CD4-positive, alpha-beta memory T cell (primary cell): ENCODE measurements at regions of chr1 and their contacts with region 1.

Region 1: GRCh38 chr1:77143529-77144121 is 75.6 kb downstream of the PIGK start:
- DNase-seq: peak in 3 of 5 donors; percentile 7 to 16 (median 8)
- H3K4me3 ChIP-seq: no peak overlapping the region
- H3K4me3 Mint-ChIP-seq: no peak overlapping the region
- H3K27ac ChIP-seq: no peak overlapping the region
- H3K27ac Mint-ChIP-seq: no peak overlapping the region
- H3K4me1 ChIP-seq: peaks cover 4% of the 10 kb centered on the region
- H3K4me1 Mint-ChIP-seq: peaks cover 3 to 6% (median 4%) of the 10 kb centered on the region in 4 donors
- H3K27me3 ChIP-seq: no peaks in the 10 kb centered on the region
- H3K27me3 Mint-ChIP-seq: no peaks in the 10 kb centered on the region

Region 2: DNA sequence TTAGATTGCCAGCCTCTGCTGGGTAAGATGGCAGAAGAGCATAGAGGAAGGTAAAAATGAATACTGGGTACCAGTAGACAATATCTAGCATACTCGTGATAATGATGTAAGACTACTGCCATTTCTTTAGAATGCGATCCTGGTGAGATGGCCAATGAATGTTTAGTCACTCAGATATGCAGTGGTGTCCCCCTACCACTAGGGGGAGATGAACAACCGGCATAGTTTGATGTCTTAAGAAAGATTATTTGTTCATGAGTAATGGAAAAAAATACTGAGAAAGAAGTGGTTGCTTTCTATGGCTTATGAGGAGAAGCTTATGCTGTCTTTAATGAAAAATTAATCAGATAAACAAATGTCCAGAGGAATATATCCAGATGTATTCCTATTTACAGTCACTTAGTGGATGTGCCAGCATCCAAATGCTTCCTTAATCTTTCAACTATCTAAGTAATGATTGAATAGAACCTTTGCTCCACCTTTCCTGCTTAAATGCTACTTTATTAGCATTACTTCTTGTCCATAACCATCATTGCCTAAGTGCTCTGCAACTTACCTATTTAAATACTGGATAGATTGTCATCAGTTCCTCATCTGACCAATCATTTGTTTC is 812.5 kb before region 1 on chr1:
- CTCF ChIA-PET with region 1: no interaction called
- POLR2A ChIA-PET with region 1: no interaction called
- intact Hi-C with region 1: loop called (anchors 5 kb)
- DNase-seq: peak; percentile 35 to 42 (median 36)
- H3K4me3 ChIP-seq: no peak overlapping the region
- H3K4me3 Mint-ChIP-seq: no peak overlapping the region
- H3K27ac ChIP-seq: no peak overlapping the region
- H3K27ac Mint-ChIP-seq: no peak overlapping the region
- H3K4me1 ChIP-seq: no peaks in the 10 kb centered on the region
- H3K4me1 Mint-ChIP-seq: peaks cover 0 to 6% (median 5%) of the 10 kb centered on the region in 4 donors
- H3K27me3 ChIP-seq: no peaks in the 10 kb centered on the region
- H3K27me3 Mint-ChIP-seq: no peaks in the 10 kb centered on the region

Region 3: DNA sequence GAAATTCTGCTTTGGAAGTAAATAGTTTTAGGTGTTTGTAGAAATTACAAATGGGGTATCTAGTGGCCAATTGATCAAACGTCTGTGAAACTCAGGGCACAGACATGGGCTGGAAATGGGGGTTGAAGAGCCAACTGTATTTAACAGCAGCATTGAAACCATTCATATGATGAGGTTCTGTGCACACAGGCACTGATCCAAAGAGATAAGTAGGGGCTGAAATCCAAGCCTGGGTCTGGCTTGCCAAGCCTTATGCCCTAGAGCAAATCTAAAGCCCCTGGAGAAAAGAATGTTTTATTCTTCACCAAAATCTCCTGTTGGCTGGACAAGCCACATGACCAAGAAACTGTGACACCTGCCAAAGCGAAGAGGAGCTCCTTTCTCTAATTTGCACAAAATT is 343.9 kb before region 1 on chr1:
- CTCF ChIA-PET with region 1: no interaction called
- POLR2A ChIA-PET with region 1: no interaction called
- intact Hi-C with region 1: no loop called
- DNase-seq: no peak
- H3K4me3 ChIP-seq: no peak overlapping the region
- H3K4me3 Mint-ChIP-seq: no peak overlapping the region
- H3K27ac ChIP-seq: no peak overlapping the region
- H3K27ac Mint-ChIP-seq: no peak overlapping the region
- H3K4me1 ChIP-seq: no peaks in the 10 kb centered on the region
- H3K4me1 Mint-ChIP-seq: no peaks in the 10 kb centered on the region
- H3K27me3 ChIP-seq: no peaks in the 10 kb centered on the region
- H3K27me3 Mint-ChIP-seq: no peaks in the 10 kb centered on the region

Region 4: GRCh38 chr1:76901158-76901767 is 242.4 kb before region 1 on chr1:
- CTCF ChIA-PET with region 1: no interaction called
- POLR2A ChIA-PET with region 1: no interaction called
- intact Hi-C with region 1: loop called (anchors 2 kb)
- DNase-seq: peak in 4 of 5 donors; percentile 10 to 19 (median 16)
- H3K4me3 ChIP-seq: no peak overlapping the region
- H3K4me3 Mint-ChIP-seq: no peak overlapping the region
- H3K27ac ChIP-seq: no peak overlapping the region
- H3K27ac Mint-ChIP-seq: no peak overlapping the region
- H3K4me1 ChIP-seq: no peaks in the 10 kb centered on the region
- H3K4me1 Mint-ChIP-seq: no peaks in the 10 kb centered on the region
- H3K27me3 ChIP-seq: no peaks in the 10 kb centered on the region
- H3K27me3 Mint-ChIP-seq: peaks cover 0 to 2% of the 10 kb centered on the region in 2 donors

Region 5: GRCh38 chr1:77044136-77044849 is 99.3 kb before region 1 on chr1:
- CTCF ChIA-PET with region 1: no interaction called
- POLR2A ChIA-PET with region 1: no interaction called
- intact Hi-C with region 1: no loop called
- DNase-seq: no peak
- H3K4me3 ChIP-seq: no peak overlapping the region
- H3K4me3 Mint-ChIP-seq: no peak overlapping the region
- H3K27ac ChIP-seq: no peak overlapping the region
- H3K27ac Mint-ChIP-seq: no peak overlapping the region
- H3K4me1 ChIP-seq: peaks cover 8% of the 10 kb centered on the region
- H3K4me1 Mint-ChIP-seq: peaks cover 9 to 23% (median 18%) of the 10 kb centered on the region in 4 donors
- H3K27me3 ChIP-seq: no peaks in the 10 kb centered on the region
- H3K27me3 Mint-ChIP-seq: peaks cover 4% of the 10 kb centered on the region in 2 donors

Region 6: GRCh38 chr1:77313491-77313890 is 169.9 kb after region 1 on chr1:
- CTCF ChIA-PET with region 1: no interaction called
- POLR2A ChIA-PET with region 1: no interaction called
- intact Hi-C with region 1: loop called (anchors 1 kb)
- DNase-seq: peak; percentile 12 to 25 (median 24)
- H3K4me3 ChIP-seq: no peak overlapping the region
- H3K4me3 Mint-ChIP-seq: peak overlapping the region in 1 of 8 donors; percentile 26
- H3K27ac ChIP-seq: no peak overlapping the region
- H3K27ac Mint-ChIP-seq: peak overlapping the region in 1 of 7 donors; percentile 37
- H3K4me1 ChIP-seq: peaks cover 17% of the 10 kb centered on the region
- H3K4me1 Mint-ChIP-seq: peaks cover 18 to 34% (median 26%) of the 10 kb centered on the region in 4 donors
- H3K27me3 ChIP-seq: no peaks in the 10 kb centered on the region
- H3K27me3 Mint-ChIP-seq: peaks cover 1 to 3% of the 10 kb centered on the region in 2 donors

Region 7: DNA sequence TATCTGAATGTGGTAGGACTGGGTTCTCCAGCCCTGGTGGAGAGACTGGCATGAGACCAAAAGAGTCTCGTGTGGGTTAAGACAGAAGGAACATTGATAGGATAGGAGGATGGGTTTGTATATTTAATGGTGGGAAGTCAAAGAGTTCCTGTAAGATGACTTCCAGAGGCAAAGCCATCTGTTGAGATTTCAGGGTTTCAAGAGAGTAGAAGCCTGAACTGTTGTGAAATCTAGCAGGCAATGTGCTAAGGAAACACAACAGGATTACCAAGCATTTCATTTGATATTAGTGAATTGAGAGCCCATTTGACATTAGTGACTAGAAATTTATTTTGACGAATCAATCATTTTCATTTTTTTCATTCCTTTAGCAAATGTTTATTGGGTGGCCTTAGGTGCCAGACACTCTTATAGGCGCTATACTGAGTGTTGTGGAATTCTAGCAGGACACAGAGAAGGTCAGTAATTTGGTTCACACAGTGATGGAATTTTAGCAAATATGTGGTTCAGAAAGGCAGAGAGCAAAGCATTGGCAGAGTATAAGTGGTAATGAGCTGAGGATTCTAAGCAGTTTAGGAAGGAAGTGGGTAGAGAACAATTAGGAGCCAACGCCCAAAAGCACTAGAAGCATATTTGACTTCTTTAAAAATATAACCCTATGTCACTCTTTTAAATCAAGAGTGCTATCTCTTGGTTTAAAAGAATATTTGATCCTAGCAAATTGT is 287.5 kb after region 1 on chr1:
- CTCF ChIA-PET with region 1: no interaction called
- POLR2A ChIA-PET with region 1: no interaction called
- intact Hi-C with region 1: loop called (anchors 1 kb)
- DNase-seq: peak in 4 of 5 donors; percentile 50 to 68 (median 64)
- H3K4me3 ChIP-seq: peak overlapping the region in 1 of 2 donors; percentile 21
- H3K4me3 Mint-ChIP-seq: no peak overlapping the region
- H3K27ac ChIP-seq: peak overlapping the region; percentile 44
- H3K27ac Mint-ChIP-seq: no peak overlapping the region
- H3K4me1 ChIP-seq: peaks cover 59% of the 10 kb centered on the region
- H3K4me1 Mint-ChIP-seq: peaks cover 17 to 19% (median 17%) of the 10 kb centered on the region in 4 donors
- H3K27me3 ChIP-seq: no peaks in the 10 kb centered on the region
- H3K27me3 Mint-ChIP-seq: no peaks in the 10 kb centered on the region